ENCODE measurements at regions of chr16 and their contacts with region 1.

Region 1: DNA sequence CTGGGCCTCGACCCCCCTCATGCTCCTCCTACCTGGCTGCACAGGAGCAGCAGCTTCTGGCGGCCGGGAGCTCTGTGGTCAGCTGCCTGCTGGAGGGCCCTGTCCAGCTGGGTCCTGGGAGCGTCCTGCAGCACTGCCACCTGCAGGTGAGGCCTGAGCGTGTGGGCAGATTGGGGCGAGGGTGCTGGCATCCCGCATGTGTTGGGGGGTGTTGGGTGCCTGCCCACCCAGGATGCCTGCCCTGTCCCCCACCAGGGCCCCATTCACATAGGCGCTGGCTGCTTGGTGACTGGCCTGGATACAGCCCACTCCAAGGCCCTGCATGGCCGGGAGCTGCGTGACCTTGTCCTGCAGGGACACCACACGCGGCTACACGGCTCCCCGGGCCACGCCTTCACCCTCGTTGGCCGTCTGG is 16.5 kb downstream of the FCSK start:
- DNase-seq: peak; percentile 76
- ATAC-seq: peak; percentile 63
- H3K4me3 Mint-ChIP-seq: no peak overlapping the region
- H3K27ac Mint-ChIP-seq: no peak overlapping the region
- H3K4me1 Mint-ChIP-seq: peaks cover 3% of the 10 kb centered on the region; the same call in 1 of the 2 replicates
- H3K27me3 Mint-ChIP-seq: no peaks in the 10 kb centered on the region
- CTCF ChIP-seq: no peak

Region 2: GRCh38 chr16:70380861-70381603 is 89.9 kb before region 1 on chr16:
- CTCF ChIA-PET with region 1: interaction called, 42 read pairs
- POLR2A ChIA-PET with region 1: interaction called, 7 read pairs
- DNase-seq: peak; percentile 98
- ATAC-seq: peak; percentile 90
- H3K4me3 Mint-ChIP-seq: peak overlapping the region; percentile 92
- H3K27ac Mint-ChIP-seq: peak overlapping the region; percentile 98
- H3K4me1 Mint-ChIP-seq: peaks cover 16% of the 10 kb centered on the region
- H3K27me3 Mint-ChIP-seq: no peaks in the 10 kb centered on the region
- CTCF ChIP-seq: no peak

Region 3: GRCh38 chr16:70407811-70408274 is 63.1 kb before region 1 on chr16:
- CTCF ChIA-PET with region 1: interaction called, 16 read pairs
- POLR2A ChIA-PET with region 1: no interaction called
- DNase-seq: no peak
- ATAC-seq: peak; percentile 38
- H3K4me3 Mint-ChIP-seq: no peak overlapping the region
- H3K27ac Mint-ChIP-seq: peak overlapping the region; percentile 46
- H3K4me1 Mint-ChIP-seq: peaks cover 26% of the 10 kb centered on the region
- H3K27me3 Mint-ChIP-seq: no peaks in the 10 kb centered on the region
- CTCF ChIP-seq: no peak

Region 4: DNA sequence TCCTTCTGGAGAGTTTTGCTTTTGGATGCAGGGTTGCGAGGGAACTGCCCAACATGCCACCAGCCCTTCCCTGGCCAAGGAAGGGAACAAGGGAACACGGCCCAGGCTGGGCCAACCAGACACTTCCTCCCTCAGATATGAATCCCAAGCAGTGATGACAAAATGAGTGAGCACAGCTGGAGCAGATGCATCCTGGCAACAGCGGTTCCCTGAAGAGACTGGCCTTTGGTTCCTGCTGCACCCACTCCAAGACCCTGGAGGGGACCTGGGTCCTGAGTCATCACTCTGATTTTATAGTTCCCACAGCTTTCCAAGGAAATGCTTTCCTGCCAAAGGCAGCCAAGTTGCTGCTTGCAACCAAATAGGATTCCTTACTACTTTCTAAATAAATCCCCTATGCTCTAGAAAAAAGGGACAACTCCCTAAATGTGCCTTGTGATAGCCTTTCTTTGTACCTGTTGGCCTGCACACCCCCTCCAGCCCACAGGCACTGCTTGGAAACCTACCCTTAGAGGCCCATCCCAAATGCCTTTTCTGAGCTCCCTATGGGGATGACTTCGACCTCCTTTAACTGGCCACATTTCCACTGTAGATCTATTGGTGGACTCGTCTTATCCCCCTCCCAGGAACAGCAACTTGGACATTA is 37.4 kb before region 1 on chr16:
- CTCF ChIA-PET with region 1: interaction called, 16 read pairs
- POLR2A ChIA-PET with region 1: no interaction called
- DNase-seq: no peak
- ATAC-seq: no peak
- H3K4me3 Mint-ChIP-seq: no peak overlapping the region
- H3K27ac Mint-ChIP-seq: peak overlapping the region; percentile 86
- H3K4me1 Mint-ChIP-seq: peaks cover 73% of the 10 kb centered on the region
- H3K27me3 Mint-ChIP-seq: no peaks in the 10 kb centered on the region
- CTCF ChIP-seq: no peak

Region 5: DNA sequence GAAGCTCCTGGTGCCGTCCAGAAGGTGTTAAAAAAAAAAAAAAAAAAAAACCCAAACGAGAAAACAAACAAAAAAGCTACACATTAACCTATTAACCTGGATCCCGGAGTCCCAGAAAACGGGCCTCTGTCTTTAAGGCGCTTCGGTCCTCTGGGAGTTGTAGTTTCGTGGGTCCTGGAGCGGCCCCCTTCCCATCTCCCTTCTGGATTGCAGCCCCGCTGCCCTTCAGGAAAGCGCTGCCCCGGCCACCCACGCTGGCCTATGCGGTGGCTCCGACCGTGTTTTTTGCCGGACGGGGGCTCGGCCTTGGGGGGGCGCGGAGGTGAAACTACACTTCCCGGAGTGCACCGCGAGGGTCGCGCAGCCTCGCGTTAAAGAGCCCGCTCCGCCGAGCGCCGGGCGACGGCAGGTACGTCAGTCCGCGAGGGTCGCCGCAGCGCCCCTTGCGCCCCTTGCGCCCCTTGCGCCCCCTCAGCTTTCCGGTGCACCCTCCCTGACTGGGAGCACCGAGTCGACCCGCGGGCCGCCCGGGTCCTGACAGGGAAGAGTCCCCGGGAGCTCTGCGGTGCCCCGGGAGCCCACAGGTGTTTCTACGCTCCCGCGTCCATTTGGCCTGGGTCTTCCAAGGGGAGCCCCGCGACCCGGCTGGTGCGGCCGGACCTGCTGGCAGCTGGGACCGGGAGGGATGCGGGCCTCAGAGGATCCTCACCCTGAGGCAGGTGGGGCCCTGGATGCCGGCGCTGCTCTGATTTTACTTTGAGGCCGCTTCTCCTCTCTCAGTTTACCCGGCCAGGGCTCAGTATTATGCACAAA is 16.5 kb before region 1 on chr16 and contains the start of gene FCSK:
- CTCF ChIA-PET with region 1: interaction called, 28 read pairs
- POLR2A ChIA-PET with region 1: interaction called, 3 read pairs
- DNase-seq: peak; percentile 84
- ATAC-seq: peak; percentile 94
- H3K4me3 Mint-ChIP-seq: peak within 1 kb of the TSS; percentile 92
- H3K27ac Mint-ChIP-seq: peak within 1 kb of the TSS; percentile 97
- H3K4me1 Mint-ChIP-seq: peaks cover 10% of the 10 kb centered on the region
- H3K27me3 Mint-ChIP-seq: no peaks in the 10 kb centered on the region
- CTCF ChIP-seq: no peak
- total RNA-seq, gene FCSK: 7.0 to 10.6 TPM (median 8.6 TPM) in 3 replicates

Region 6: DNA sequence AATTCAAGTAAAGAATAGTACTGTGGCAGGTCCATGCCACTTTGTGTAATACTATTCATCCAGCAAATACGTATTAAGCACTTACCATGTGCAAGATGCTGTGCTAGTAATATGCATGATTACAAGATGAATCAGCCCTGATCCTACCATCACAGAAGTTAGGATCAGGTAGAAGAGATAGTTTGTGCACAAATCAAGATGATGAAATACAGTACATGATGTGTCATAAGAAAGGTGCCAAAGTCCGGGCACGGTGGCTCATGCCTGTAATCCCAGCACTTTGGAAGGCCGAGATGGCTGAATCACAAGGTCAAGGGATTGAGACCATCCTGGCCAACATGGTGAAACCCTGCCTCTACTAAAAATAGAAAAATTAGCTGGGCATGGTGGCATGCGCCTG is 41.5 kb after region 1 on chr16:
- CTCF ChIA-PET with region 1: no interaction called
- POLR2A ChIA-PET with region 1: no interaction called
- DNase-seq: no peak
- ATAC-seq: no peak
- H3K4me3 Mint-ChIP-seq: no peak overlapping the region
- H3K27ac Mint-ChIP-seq: no peak overlapping the region
- H3K4me1 Mint-ChIP-seq: no peaks in the 10 kb centered on the region
- H3K27me3 Mint-ChIP-seq: no peaks in the 10 kb centered on the region
- CTCF ChIP-seq: no peak

Measured in WTC11 (cell line).